Heart right ventricle (tissue), 16 donors: ENCODE measurements at regions of chr18 and their contacts with region 1.

Region 1: DNA sequence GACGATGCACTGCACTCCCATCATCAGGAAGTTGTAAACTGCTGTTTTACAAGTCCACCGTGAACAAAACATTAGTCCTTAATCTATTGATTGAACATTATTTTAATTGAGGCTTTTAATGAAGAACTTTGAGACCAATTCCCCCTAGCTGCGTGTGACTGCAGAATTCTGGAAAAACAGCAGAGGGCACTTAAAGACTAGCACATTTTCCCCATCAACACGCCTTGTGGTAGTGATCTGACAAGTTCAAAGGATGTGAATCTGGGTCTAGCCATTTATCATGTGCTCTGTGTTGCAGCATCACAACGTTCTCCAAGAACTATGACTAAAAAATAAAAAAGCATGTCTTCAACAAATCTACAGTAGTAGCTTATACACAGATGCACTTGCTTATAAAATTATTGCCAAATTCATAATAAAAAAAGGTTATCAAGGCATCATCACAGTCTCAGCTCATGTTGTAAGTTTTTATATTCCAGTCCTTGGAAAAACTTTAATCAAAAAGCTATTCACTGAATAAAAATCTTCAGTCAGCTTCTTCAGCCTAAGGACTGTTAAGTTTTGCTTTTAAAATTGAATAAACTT is 35.8 kb downstream of the SKOR2 start:
- DNase-seq: peak in 1 of 2 donors; percentile 5
- ATAC-seq: peak in 3 of 8 donors; percentile 49 to 73 (median 64)
- H3K4me3 ChIP-seq: no peak overlapping the region
- H3K27ac ChIP-seq: no peak overlapping the region
- H3K4me1 ChIP-seq: no peaks in the 10 kb centered on the region
- H3K27me3 ChIP-seq: peaks cover 0 to 92% (median 70%) of the 10 kb centered on the region in 7 donors
- CTCF ChIP-seq: peak in 8 of 9 donors; percentile 20 to 72 (median 60)

Region 2: GRCh38 chr18:47748847-47749599 is 533.4 kb after region 1 on chr18:
- intact Hi-C with region 1: loop called (anchors 1 to 5 kb)
- DNase-seq: peak; percentile 63 to 83
- ATAC-seq: peak; percentile 90 to 96 (median 94)
- H3K4me3 ChIP-seq: peak overlapping the region in 7 of 10 donors; percentile 2 to 47 (median 35)
- H3K27ac ChIP-seq: no peak overlapping the region
- H3K4me1 ChIP-seq: peaks cover 0 to 5% (median 3%) of the 10 kb centered on the region in 9 donors
- H3K27me3 ChIP-seq: peaks cover 0 to 34% (median 16%) of the 10 kb centered on the region in 7 donors
- CTCF ChIP-seq: peak in 8 of 9 donors; percentile 99 to 100 (median 100)